IMR-90 (cell line): ENCODE measurements at regions of chrX and their contacts with region 1.

Region 1: DNA sequence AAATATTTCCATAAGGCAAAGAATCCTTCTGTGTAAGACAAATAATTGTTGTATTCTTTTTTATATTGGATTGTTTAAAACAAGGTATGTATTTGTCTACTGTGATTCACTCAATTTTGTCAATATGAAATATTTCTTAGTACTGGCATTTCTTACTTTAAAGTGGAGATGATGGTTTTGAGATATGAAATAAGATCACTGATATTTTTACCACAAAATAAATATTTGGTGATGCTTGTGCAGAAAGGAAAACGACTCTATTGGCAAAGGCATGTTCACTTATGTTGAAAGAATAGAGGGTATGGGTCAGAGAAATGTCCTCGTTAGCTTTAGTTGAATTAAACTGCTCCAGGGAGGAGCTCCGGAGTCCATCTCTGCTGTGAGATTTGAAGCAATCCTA is 84.1 kb downstream of the SH3BGRL start:
- DNase-seq: no peak
- ATAC-seq: no peak
- H3K4me3 ChIP-seq: no peak overlapping the region
- H3K27ac ChIP-seq: no peak overlapping the region
- H3K4me1 ChIP-seq: no peaks in the 10 kb centered on the region
- H3K27me3 ChIP-seq: no peaks in the 10 kb centered on the region
- CTCF ChIP-seq: no peak
- POLR2A ChIP-seq: no peak
- RAD21 ChIP-seq: no peak

Region 2: DNA sequence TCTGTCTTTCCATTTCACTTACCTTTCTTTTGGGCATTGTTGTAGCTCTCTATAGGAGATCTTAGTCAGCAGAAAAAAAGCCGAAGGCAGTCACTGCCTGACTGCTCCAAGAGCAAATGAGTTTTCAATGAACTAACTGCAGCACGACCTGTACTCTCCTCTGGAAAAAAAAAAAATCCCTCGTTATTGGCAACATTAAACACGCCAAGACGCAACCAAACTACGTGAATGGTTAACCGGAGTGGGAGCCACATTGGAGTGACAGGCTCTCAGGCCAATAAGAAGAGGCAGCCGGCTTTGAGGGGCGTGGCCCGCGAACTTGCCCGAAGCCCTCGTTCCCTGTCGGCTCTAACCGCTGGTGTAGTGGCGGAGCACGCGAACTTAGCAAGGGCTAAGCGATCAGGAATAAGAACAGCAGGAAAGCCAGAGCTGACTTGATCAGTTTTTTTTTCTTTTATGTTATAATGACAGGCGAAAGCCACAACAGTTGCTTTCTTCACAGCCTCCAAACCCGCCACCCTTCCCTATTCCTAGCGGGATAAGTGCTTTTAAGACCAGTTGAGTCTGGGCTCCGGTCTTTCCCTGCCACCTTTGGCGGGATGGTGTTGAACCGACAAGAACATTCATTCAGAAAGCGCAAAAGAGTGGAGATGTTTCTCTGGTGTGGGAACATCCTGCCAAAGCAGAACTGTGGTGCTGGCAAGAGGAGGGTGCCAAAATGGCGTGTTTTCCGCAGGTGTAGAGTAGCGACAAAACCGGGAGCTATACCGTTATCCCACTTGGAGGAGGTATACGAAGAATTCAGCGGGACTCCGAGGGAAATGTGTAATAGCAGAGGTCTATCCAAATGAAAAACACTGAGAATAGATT is 164.3 kb before region 1 on chrX:
- CTCF ChIA-PET with region 1: interaction called, 14 read pairs
- POLR2A ChIA-PET with region 1: no interaction called
- dilution Hi-C with region 1: no loop called
- in situ Hi-C with region 1: no loop called
- intact Hi-C with region 1: no loop called
- DNase-seq: peak; percentile 90
- ATAC-seq: peak; percentile 96
- H3K4me3 ChIP-seq: peak overlapping the region; percentile 58
- H3K27ac ChIP-seq: no peak overlapping the region
- H3K4me1 ChIP-seq: no peaks in the 10 kb centered on the region
- H3K27me3 ChIP-seq: no peaks in the 10 kb centered on the region
- CTCF ChIP-seq: no peak
- POLR2A ChIP-seq: no peak
- RAD21 ChIP-seq: no peak

Region 3: DNA sequence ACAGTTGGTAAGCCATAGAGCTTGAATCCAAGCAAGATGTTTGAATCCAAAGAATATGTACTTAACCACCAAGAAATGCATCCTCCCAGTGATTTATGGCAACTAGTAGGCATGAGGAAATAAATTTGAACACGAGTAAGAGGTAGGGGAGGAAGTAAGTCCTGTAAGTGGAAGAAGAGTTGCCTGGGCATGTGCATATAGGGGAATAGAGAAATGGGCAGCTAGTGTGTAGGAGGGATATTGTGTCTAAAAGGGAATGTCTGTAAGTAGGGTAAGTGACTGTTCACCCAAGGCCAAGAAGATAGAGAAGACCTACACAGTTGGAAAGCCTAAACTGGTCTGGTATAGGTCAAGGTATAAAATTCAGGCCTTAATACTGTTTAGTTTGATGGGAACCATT is 79.5 kb before region 1 on chrX:
- CTCF ChIA-PET with region 1: no interaction called
- POLR2A ChIA-PET with region 1: no interaction called
- dilution Hi-C with region 1: no loop called
- in situ Hi-C with region 1: no loop called
- intact Hi-C with region 1: no loop called
- DNase-seq: no peak
- ATAC-seq: no peak
- H3K4me3 ChIP-seq: no peak overlapping the region
- H3K27ac ChIP-seq: no peak overlapping the region
- H3K4me1 ChIP-seq: no peaks in the 10 kb centered on the region
- H3K27me3 ChIP-seq: no peaks in the 10 kb centered on the region
- CTCF ChIP-seq: no peak
- POLR2A ChIP-seq: no peak
- RAD21 ChIP-seq: no peak